ENCODE measurements at regions of chr2 and their contacts with region 1.

Region 1: GRCh38 chr2:199739413-199740110 is 111.4 kb downstream of the FTCDNL1 start:
- DNase-seq: peak; percentile 54
- CTCF ChIP-seq: peak; percentile 88

Region 2: GRCh38 chr2:198309673-198310280 is 1429.8 kb before region 1 on chr2:
- CTCF ChIA-PET with region 1: interaction called, 35 read pairs
- POLR2A ChIA-PET with region 1: no interaction called
- DNase-seq: peak; percentile 54
- CTCF ChIP-seq: peak; percentile 77

Region 3: DNA sequence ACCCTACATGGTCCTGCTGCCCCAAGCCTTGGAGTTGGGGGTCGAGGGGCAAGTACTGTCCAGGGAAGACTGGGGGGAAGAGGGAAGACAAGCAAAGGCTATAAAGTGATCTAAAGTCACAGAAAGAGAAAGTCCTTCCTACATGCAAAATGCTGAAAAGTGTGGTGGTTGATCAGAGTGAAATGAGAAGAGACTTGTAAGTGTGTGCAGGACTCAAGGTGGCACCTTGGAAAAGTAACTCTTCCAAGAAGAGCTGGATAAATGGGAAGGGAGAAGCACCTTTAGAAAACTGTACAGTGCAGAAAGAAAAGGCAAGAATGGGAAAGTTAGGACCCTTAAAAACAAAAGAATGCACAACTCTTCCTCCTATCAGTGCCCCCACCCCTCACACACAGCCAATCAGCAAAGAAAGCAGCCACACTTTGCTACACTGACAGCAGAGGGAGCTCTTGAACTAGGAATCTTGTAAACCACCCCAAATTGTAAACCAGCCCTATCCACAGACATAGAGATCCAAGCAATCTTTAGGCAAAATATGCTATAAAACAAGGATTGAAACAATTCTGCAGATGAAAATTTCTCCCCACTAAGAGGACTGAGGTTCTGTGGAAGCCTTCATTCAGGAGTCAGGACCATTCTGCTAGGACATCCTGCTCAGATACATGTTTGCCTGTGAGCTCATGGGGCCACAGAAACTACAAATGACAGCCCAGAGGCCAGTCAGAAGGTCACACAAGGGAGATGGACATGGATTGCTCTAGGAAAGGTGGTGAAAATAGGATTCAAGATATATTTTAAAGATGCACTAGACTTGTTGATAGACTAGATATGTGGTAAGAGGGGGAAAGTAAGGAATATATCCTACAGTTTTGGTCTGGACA is 35.0 kb before region 1 on chr2:
- CTCF ChIA-PET with region 1: interaction called, 28 read pairs
- POLR2A ChIA-PET with region 1: no interaction called
- DNase-seq: peak; percentile 25
- CTCF ChIP-seq: peak; percentile 57

Region 4: GRCh38 chr2:199751472-199752120 is 12.0 kb after region 1 on chr2:
- CTCF ChIA-PET with region 1: interaction called, 47 read pairs
- POLR2A ChIA-PET with region 1: no interaction called
- DNase-seq: no peak
- CTCF ChIP-seq: no peak

Region 5: GRCh38 chr2:199764273-199764800 is 24.8 kb after region 1 on chr2:
- CTCF ChIA-PET with region 1: interaction called, 14 read pairs
- POLR2A ChIA-PET with region 1: no interaction called
- DNase-seq: no peak
- CTCF ChIP-seq: no peak

Region 6: GRCh38 chr2:199797431-199798403 is 58.2 kb after region 1 on chr2:
- CTCF ChIA-PET with region 1: no interaction called
- POLR2A ChIA-PET with region 1: no interaction called
- DNase-seq: no peak
- CTCF ChIP-seq: no peak

Measured in GM10248 (cell line).